Left ventricle myocardium inferior (tissue), 1 donor: ENCODE measurements at regions of chr3 and their contacts with region 1.

Region 1: GRCh38 chr3:45656575-45657363 is 32.4 kb upstream of the SACM1L start:
- DNase-seq: peak; percentile 88
- H3K4me3 ChIP-seq: no peak overlapping the region
- H3K27ac ChIP-seq: no peak overlapping the region
- H3K4me1 ChIP-seq: peaks cover 64% of the 10 kb centered on the region
- H3K27me3 ChIP-seq: no peaks in the 10 kb centered on the region
- CTCF ChIP-seq: peak; percentile 98

Region 2: GRCh38 chr3:45311953-45312801 is 344.6 kb before region 1 on chr3:
- intact Hi-C with region 1: no loop called
- DNase-seq: no peak
- H3K4me3 ChIP-seq: no peak overlapping the region
- H3K27ac ChIP-seq: no peak overlapping the region
- H3K4me1 ChIP-seq: no peaks in the 10 kb centered on the region
- H3K27me3 ChIP-seq: peaks cover 63% of the 10 kb centered on the region
- CTCF ChIP-seq: no peak

Region 3: DNA sequence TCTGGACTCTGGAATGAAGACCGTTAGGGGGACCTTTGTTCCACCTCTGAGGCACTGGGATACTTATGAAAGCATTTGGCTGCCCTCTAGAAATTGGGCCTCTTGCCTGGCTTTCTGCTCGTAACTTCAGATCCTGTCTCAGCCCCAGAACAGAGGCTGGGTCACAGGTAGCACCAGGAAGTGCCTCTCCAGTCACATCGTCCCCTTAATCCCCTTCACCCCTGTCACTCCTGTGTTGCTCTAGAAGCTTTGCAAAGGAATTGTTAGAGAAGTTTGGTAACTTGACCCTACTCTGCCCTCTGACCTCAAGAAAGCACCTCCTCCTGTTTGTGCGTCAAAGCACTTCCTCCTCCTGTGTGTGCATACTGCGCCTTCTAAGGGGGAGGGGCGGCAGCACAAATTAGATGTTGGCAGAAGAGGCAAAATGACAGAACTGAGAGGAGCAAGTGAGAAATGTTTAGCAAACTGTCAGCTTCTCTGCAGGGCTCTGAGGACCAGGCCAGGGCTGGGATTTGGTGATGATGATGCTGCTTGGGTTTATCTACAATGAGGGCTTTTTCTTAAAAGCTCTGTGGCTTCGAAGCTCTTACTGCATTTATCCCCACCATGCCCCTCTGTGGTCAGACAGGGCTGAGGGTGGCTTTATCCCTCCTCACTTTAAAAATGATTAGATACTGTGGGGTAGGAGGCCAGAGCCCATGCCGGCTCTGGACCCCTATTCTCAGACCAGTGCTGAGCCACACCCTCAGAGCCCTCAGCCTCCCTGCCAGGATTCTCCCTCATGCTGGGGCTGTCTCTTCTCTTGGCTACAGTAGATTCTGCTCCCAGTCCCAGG is 192.2 kb before region 1 on chr3:
- intact Hi-C with region 1: no loop called
- DNase-seq: no peak
- H3K4me3 ChIP-seq: no peak overlapping the region
- H3K27ac ChIP-seq: no peak overlapping the region
- H3K4me1 ChIP-seq: no peaks in the 10 kb centered on the region
- H3K27me3 ChIP-seq: no peaks in the 10 kb centered on the region
- CTCF ChIP-seq: no peak

Region 4: GRCh38 chr3:45496555-45496954 is 160.2 kb before region 1 on chr3:
- intact Hi-C with region 1: no loop called
- DNase-seq: peak; percentile 39
- H3K4me3 ChIP-seq: no peak overlapping the region
- H3K27ac ChIP-seq: no peak overlapping the region
- H3K4me1 ChIP-seq: no peaks in the 10 kb centered on the region
- H3K27me3 ChIP-seq: no peaks in the 10 kb centered on the region
- CTCF ChIP-seq: no peak

Region 5: DNA sequence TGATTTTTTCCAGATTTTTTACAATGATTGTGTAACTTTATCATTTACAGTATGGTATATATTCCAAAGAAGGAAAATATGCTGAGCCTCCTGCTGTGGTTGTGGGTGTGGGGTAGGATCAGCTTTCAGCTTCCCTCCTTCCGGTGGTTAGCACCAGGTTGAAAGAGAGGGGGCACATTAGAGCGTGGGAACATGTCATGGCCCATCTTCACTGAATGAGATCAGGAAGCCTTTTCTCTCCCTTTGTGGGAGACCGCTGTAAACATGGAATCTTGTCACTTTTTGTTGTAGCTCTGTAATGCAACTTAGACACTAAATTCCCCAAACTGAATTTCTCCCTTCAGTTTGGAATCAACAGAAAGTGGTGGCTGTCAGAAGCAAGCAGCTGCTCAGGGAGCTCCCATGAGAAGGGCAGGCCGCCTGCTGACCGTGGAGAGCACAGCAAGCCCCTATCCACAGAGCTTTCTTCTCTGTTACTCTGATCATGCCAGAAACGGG is 148.9 kb before region 1 on chr3:
- intact Hi-C with region 1: loop called (anchors 5 kb)
- DNase-seq: peak; percentile 32
- H3K4me3 ChIP-seq: no peak overlapping the region
- H3K27ac ChIP-seq: peak overlapping the region; percentile 55
- H3K4me1 ChIP-seq: peaks cover 21% of the 10 kb centered on the region
- H3K27me3 ChIP-seq: no peaks in the 10 kb centered on the region
- CTCF ChIP-seq: peak; percentile 57

Region 6: GRCh38 chr3:45593708-45594609 is 62.8 kb before region 1 on chr3:
- intact Hi-C with region 1: loop called (anchors 5 kb)
- DNase-seq: peak; percentile 81
- H3K4me3 ChIP-seq: peak overlapping the region; percentile 85
- H3K27ac ChIP-seq: peak overlapping the region; percentile 98
- H3K4me1 ChIP-seq: peaks cover 60% of the 10 kb centered on the region
- H3K27me3 ChIP-seq: no peaks in the 10 kb centered on the region
- CTCF ChIP-seq: no peak

Region 7: GRCh38 chr3:45773714-45774449 is 117.1 kb after region 1 on chr3:
- intact Hi-C with region 1: no loop called
- DNase-seq: no peak
- H3K4me3 ChIP-seq: no peak overlapping the region
- H3K27ac ChIP-seq: no peak overlapping the region
- H3K4me1 ChIP-seq: no peaks in the 10 kb centered on the region
- H3K27me3 ChIP-seq: no peaks in the 10 kb centered on the region
- CTCF ChIP-seq: no peak